CD4-positive, alpha-beta T cell (primary cell): ENCODE measurements at regions of chr17 and their contacts with region 1.

Region 1: DNA sequence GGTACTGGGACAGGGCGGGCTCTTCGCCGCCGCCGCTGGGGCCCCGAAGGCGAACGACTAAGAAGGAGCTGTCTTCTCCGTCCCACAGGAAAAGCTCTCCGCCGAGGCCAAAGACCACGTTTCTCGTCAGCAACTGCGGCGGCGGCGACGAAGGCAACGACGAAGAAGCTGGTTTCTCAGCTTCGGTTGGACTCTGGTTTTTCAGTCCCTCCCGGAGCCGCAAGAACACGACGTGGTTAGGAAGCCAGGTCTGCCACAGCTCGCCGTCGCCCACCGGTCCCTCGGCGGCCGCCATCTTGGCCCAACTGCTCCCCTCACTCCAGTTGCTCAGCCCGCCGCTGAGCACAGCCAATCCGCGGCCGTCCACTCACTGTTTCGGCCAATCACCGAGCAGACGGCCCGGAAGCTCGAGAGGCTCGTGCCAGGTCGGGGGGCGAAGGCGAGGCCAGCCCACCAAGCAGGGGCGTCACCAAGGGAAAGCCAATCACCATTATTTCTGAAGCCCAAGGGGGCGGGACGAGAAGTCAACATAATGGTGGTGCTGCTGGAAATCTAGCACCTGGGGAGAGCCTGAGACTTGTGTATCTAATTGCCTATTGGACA is at the start of gene NUP88:
- DNase-seq: peak; percentile 87 to 98 (median 92)
- ATAC-seq: peak; percentile 86
- H3K4me3 ChIP-seq: peak within 1 kb of the TSS; percentile 76
- H3K4me3 Mint-ChIP-seq: peak within 1 kb of the TSS; percentile 93
- H3K27ac ChIP-seq: peak within 1 kb of the TSS; percentile 98 to 99
- H3K27ac Mint-ChIP-seq: peak within 1 kb of the TSS; percentile 98
- H3K4me1 ChIP-seq: peaks cover 31% of the 10 kb centered on the region
- H3K4me1 Mint-ChIP-seq: peaks cover 59% of the 10 kb centered on the region
- H3K27me3 ChIP-seq: no peaks in the 10 kb centered on the region
- H3K27me3 Mint-ChIP-seq: no peaks in the 10 kb centered on the region
- CTCF ChIP-seq: no peak
- total RNA-seq, gene NUP88: 129 to 142 TPM

Region 2: DNA sequence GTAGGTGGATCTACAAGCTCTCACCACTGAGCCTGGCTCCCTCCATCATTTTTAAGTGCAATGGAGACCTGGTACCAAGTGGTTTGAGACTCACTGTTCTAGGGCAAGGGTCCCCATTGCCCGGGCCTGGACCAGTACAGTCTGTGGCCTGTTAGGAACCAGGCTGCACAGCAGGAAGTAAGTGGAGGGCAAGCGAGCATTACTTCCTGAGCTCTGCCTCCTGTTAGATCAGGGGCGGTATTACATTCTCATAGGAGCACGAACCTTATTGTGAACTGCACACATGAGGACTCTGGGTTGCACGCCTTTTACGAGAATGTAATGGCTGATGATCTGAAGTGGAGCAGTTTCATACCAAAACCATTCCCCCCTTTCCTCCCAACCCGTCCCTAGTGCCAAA is 221.0 kb before region 1 on chr17:
- CTCF ChIA-PET with region 1: no interaction called
- POLR2A ChIA-PET with region 1: no interaction called
- intact Hi-C with region 1: loop called in 1 of 2 experiments (anchors 5 kb)
- DNase-seq: peak in 1 of 14 experiments; percentile 16
- ATAC-seq: no peak
- H3K4me3 ChIP-seq: no peak overlapping the region
- H3K4me3 Mint-ChIP-seq: no peak overlapping the region
- H3K27ac ChIP-seq: no peak overlapping the region
- H3K27ac Mint-ChIP-seq: no peak overlapping the region
- H3K4me1 ChIP-seq: peaks cover 10% of the 10 kb centered on the region
- H3K4me1 Mint-ChIP-seq: peaks cover 4% of the 10 kb centered on the region
- H3K27me3 ChIP-seq: no peaks in the 10 kb centered on the region
- H3K27me3 Mint-ChIP-seq: no peaks in the 10 kb centered on the region
- CTCF ChIP-seq: no peak

Region 3: GRCh38 chr17:5438716-5439445 is 19.4 kb after region 1 on chr17 and contains the start of gene C1QBP:
- CTCF ChIA-PET with region 1: interaction called, 48 read pairs
- POLR2A ChIA-PET with region 1: interaction called, 37 read pairs
- intact Hi-C with region 1: loop called (anchors 1 kb)
- DNase-seq: peak; percentile 85 to 97 (median 91)
- ATAC-seq: peak; percentile 93
- H3K4me3 ChIP-seq: peak within 1 kb of the TSS; percentile 70
- H3K4me3 Mint-ChIP-seq: peak within 1 kb of the TSS; percentile 89
- H3K27ac ChIP-seq: peak within 1 kb of the TSS; percentile 71 to 74
- H3K27ac Mint-ChIP-seq: peak within 1 kb of the TSS; percentile 86
- H3K4me1 ChIP-seq: peaks cover 33% of the 10 kb centered on the region
- H3K4me1 Mint-ChIP-seq: peaks cover 35% of the 10 kb centered on the region
- H3K27me3 ChIP-seq: no peaks in the 10 kb centered on the region
- H3K27me3 Mint-ChIP-seq: no peaks in the 10 kb centered on the region
- CTCF ChIP-seq: peak; percentile 96
- total RNA-seq, gene C1QBP: 59.9 to 62.9 TPM

Region 4: DNA sequence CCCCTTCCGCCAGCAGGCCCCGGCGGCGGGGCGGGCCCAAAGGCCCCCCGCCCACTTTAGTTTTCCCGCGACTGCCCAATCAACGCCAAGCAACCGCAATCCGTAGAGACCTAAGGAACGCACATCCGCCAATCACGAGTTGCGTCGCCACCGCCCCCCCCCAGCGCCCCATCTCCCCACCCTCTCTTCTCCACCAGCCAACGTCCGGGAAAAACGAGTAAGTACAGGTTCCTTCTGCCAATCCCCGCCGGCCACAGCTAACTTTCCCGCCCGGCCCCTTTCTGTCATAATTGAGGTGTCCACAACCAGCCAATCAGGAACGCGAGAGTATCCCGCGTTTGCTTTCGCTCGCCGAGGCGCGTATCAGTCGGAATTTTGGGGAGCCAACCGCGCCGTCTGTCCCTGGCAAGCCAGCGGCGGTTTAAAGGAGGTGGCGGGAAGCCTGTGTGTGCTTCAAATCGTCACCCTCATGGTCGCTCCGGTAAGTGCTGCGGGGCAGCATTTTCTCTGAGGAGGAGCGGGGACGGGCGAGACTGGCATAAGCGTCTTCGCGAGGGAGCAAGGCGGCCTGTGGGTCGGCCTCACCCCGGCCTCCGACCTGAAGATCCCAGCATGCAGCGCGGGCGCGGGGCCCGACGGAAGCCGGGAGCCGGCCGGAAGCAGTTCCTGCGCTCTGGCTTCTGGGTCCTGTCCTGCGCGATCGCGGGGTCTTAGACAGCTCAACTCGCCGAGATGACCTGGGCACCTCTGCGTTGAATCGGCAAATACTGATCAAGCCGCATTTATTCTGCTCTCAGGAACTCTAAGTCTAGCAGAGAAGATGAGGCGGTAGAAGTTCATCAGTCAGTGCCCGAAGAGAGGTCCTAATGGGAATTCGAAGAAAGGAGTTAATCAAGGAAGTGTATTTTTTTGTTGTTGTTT is 67.0 kb after region 1 on chr17 and contains the start of gene MIS12:
- CTCF ChIA-PET with region 1: no interaction called
- POLR2A ChIA-PET with region 1: interaction called, 33 read pairs
- intact Hi-C with region 1: loop called (anchors 2 to 10 kb)
- DNase-seq: peak; percentile 93 to 99 (median 96)
- ATAC-seq: peak; percentile 92
- H3K4me3 ChIP-seq: peak within 1 kb of the TSS; percentile 93
- H3K4me3 Mint-ChIP-seq: peak within 1 kb of the TSS; percentile 92
- H3K27ac ChIP-seq: peak within 1 kb of the TSS; percentile 86 to 100
- H3K27ac Mint-ChIP-seq: peak within 1 kb of the TSS; percentile 96
- H3K4me1 ChIP-seq: peaks cover 27% of the 10 kb centered on the region
- H3K4me1 Mint-ChIP-seq: peaks cover 61% of the 10 kb centered on the region
- H3K27me3 ChIP-seq: no peaks in the 10 kb centered on the region
- H3K27me3 Mint-ChIP-seq: no peaks in the 10 kb centered on the region
- CTCF ChIP-seq: no peak
- total RNA-seq, gene MIS12: 19.2 to 20.3 TPM

Region 5: GRCh38 chr17:6640536-6641373 is 1221.3 kb after region 1 on chr17 and contains the starts of genes KIAA0753 and TXNDC17:
- CTCF ChIA-PET with region 1: no interaction called
- POLR2A ChIA-PET with region 1: no interaction called
- intact Hi-C with region 1: loop called in 1 of 2 experiments (anchors 10 kb)
- DNase-seq: peak; percentile 71 to 94 (median 88)
- ATAC-seq: peak; percentile 81
- H3K4me3 ChIP-seq: peak within 1 kb of the TSS; percentile 98
- H3K4me3 Mint-ChIP-seq: peak within 1 kb of the TSS; percentile 99
- H3K27ac ChIP-seq: peak within 1 kb of the TSS; percentile 76 to 88
- H3K27ac Mint-ChIP-seq: peak within 1 kb of the TSS; percentile 95
- H3K4me1 ChIP-seq: peaks cover 38% of the 10 kb centered on the region
- H3K4me1 Mint-ChIP-seq: peaks cover 78% of the 10 kb centered on the region
- H3K27me3 ChIP-seq: no peaks in the 10 kb centered on the region
- H3K27me3 Mint-ChIP-seq: no peaks in the 10 kb centered on the region
- CTCF ChIP-seq: no peak
- total RNA-seq, gene KIAA0753: 8.9 to 11.7 TPM
- total RNA-seq, gene TXNDC17: 13.2 to 17.7 TPM